Gastrocnemius medialis (tissue), 4 donors: ENCODE measurements at regions of chr7 and their contacts with region 1.

Region 1: GRCh38 chr7:33932832-33933468 is 27.6 kb downstream of the BMPER start:
- DNase-seq: peak; percentile 66 to 76
- ATAC-seq: peak; percentile 89 to 90
- H3K4me3 ChIP-seq: peak overlapping the region; percentile 11 to 44 (median 34)
- H3K27ac ChIP-seq: peak overlapping the region; percentile 5 to 54 (median 17)
- H3K4me1 ChIP-seq: peaks cover 10 to 11% of the 10 kb centered on the region in 2 donors
- H3K27me3 ChIP-seq: no peaks in the 10 kb centered on the region
- CTCF ChIP-seq: peak; percentile 76 to 97 (median 86)
- POLR2A ChIP-seq: no peak

Region 2: DNA sequence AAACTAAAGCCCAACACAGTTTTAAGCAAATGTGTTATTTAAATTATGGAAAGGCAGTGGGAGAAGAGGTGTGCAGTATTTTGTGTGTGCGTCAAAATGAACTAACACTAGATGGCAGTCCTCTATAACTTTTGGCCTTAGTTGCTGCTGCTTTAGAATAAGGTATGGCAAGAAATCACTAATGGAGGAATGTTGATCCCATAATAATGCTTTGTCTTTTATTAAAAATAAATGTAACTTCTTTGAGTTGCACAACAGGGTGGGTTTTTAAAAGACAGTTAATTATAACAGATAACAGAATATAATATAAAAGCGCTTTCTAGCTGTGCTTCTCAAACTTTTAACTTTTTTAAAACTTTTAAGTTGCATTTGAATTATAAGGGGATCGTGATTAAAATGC is 747.2 kb before region 1 on chr7:
- in situ Hi-C with region 1: no loop called
- intact Hi-C with region 1: loop called (anchors 10 kb)
- DNase-seq: no peak
- ATAC-seq: peak in 1 of 2 donors; percentile 51
- H3K4me3 ChIP-seq: no peak overlapping the region
- H3K27ac ChIP-seq: no peak overlapping the region
- H3K4me1 ChIP-seq: no peaks in the 10 kb centered on the region
- H3K27me3 ChIP-seq: no peaks in the 10 kb centered on the region
- CTCF ChIP-seq: peak in 4 of 5 experiments; percentile 36 to 58 (median 46)
- POLR2A ChIP-seq: no peak

Region 3: GRCh38 chr7:33261585-33261984 is 671.4 kb before region 1 on chr7:
- in situ Hi-C with region 1: loop called in 1 of 4 experiments (anchors 25 kb)
- intact Hi-C with region 1: no loop called
- DNase-seq: no peak
- ATAC-seq: no peak
- H3K4me3 ChIP-seq: no peak overlapping the region
- H3K27ac ChIP-seq: no peak overlapping the region
- H3K4me1 ChIP-seq: peaks cover 0 to 6% of the 10 kb centered on the region in 2 donors
- H3K27me3 ChIP-seq: no peaks in the 10 kb centered on the region
- CTCF ChIP-seq: no peak
- POLR2A ChIP-seq: no peak

Region 4: GRCh38 chr7:33459340-33459751 is 473.6 kb before region 1 on chr7:
- in situ Hi-C with region 1: loop called in 1 of 4 experiments (anchors 25 kb)
- intact Hi-C with region 1: no loop called
- DNase-seq: peak in 1 of 2 donors; percentile 11
- ATAC-seq: peak; percentile 58 to 75
- H3K4me3 ChIP-seq: no peak overlapping the region
- H3K27ac ChIP-seq: no peak overlapping the region
- H3K4me1 ChIP-seq: no peaks in the 10 kb centered on the region
- H3K27me3 ChIP-seq: no peaks in the 10 kb centered on the region
- CTCF ChIP-seq: peak in 3 of 5 experiments; percentile 37 to 57 (median 40)
- POLR2A ChIP-seq: no peak

Region 5: GRCh38 chr7:33757562-33758165 is 175.3 kb before region 1 on chr7:
- in situ Hi-C with region 1: loop called in 1 of 4 experiments (anchors 5 kb)
- intact Hi-C with region 1: loop called (anchors 1 kb)
- DNase-seq: no peak
- ATAC-seq: peak in 1 of 2 donors; percentile 22
- H3K4me3 ChIP-seq: no peak overlapping the region
- H3K27ac ChIP-seq: no peak overlapping the region
- H3K4me1 ChIP-seq: peaks cover 9 to 17% of the 10 kb centered on the region in 2 donors
- H3K27me3 ChIP-seq: no peaks in the 10 kb centered on the region
- CTCF ChIP-seq: peak; percentile 45 to 74 (median 70)
- POLR2A ChIP-seq: no peak

Region 6: DNA sequence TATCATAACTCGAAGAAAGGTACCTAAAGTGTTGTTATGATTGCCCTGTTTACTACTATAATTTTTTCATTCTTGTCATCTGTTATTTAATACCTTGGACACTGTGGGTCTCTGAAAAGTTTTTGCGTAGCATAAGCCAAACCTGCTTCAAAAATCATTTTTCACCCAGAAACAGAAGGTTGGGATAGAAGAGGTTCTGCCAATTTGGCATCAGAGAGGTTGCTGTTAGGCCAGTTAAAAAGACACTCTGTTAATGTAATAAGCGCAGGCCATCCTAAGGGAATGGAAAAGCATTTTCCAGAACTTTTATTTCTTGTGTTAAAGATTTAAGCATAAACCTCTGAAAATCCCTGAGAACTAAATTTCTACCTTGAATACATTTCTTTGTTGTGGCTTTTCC is 184.6 kb after region 1 on chr7:
- in situ Hi-C with region 1: no loop called
- intact Hi-C with region 1: no loop called
- DNase-seq: no peak
- ATAC-seq: no peak
- H3K4me3 ChIP-seq: no peak overlapping the region
- H3K27ac ChIP-seq: no peak overlapping the region
- H3K4me1 ChIP-seq: no peaks in the 10 kb centered on the region
- H3K27me3 ChIP-seq: no peaks in the 10 kb centered on the region
- CTCF ChIP-seq: no peak
- POLR2A ChIP-seq: no peak